ENCODE measurements at regions of chr1 and their contacts with region 1.

Region 1: DNA sequence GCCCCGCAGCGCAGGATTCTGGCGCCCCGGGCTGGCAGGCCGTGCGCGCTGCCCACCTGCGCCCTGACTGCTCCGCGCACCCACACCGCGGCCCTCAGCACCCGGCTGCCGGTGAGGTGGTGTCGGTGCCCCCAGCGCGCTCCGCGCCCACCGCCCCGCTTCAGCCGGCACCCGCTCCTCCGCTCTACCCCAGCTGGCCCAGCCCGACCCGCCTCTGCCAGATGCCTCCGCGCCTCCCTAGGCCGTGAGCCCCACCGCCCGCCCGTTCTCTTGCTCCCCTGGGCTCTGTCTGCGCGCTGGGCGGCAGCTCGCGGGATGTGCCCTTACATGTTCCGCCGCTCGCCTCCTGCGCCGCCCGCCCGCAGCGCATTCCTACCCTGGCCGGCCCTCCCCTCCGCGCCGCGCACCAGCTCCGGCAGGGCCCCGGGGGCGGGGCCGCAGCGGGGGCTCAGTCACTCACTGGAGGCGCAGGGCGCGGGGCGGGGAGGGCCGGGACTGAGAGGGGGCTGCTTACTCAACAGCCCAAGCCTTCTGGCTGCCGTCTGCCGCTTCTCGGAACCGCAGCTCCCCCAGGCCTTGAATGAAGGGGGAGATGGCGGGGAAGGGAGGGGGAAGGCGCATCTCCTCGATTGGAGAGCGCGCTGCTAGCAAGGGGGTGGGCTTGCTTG is at the start of gene PHLDA3:
- DNase-seq: peak; percentile 69
- H3K4me3 Mint-ChIP-seq: peak within 1 kb of the TSS; percentile 77
- H3K27ac Mint-ChIP-seq: peak within 1 kb of the TSS; percentile 45
- H3K4me1 Mint-ChIP-seq: peaks cover 21% of the 10 kb centered on the region
- H3K27me3 Mint-ChIP-seq: peaks cover 37% of the 10 kb centered on the region
- total RNA-seq, gene PHLDA3: 9.0 to 11.4 TPM

Region 2: GRCh38 chr1:201436393-201436792 is 32.6 kb before region 1 on chr1:
- CTCF ChIA-PET with region 1: interaction called, 11 read pairs
- POLR2A ChIA-PET with region 1: no interaction called
- DNase-seq: no peak
- H3K4me3 Mint-ChIP-seq: no peak overlapping the region
- H3K27ac Mint-ChIP-seq: no peak overlapping the region
- H3K4me1 Mint-ChIP-seq: peaks cover 4% of the 10 kb centered on the region
- H3K27me3 Mint-ChIP-seq: peaks cover 34% of the 10 kb centered on the region

Region 3: GRCh38 chr1:201447911-201448871 is 20.8 kb before region 1 on chr1:
- CTCF ChIA-PET with region 1: interaction called, 44 read pairs
- POLR2A ChIA-PET with region 1: interaction called, 3 read pairs
- DNase-seq: peak; percentile 78
- H3K4me3 Mint-ChIP-seq: no peak overlapping the region
- H3K27ac Mint-ChIP-seq: no peak overlapping the region
- H3K4me1 Mint-ChIP-seq: peaks cover 37% of the 10 kb centered on the region
- H3K27me3 Mint-ChIP-seq: peaks cover 25% of the 10 kb centered on the region

Region 4: GRCh38 chr1:201506556-201507359 is 37.8 kb after region 1 on chr1 and contains the start of gene CSRP1:
- CTCF ChIA-PET with region 1: no interaction called
- POLR2A ChIA-PET with region 1: interaction called, 11 read pairs
- DNase-seq: peak; percentile 89
- H3K4me3 Mint-ChIP-seq: peak within 1 kb of the TSS; percentile 93
- H3K27ac Mint-ChIP-seq: peak within 1 kb of the TSS; percentile 82
- H3K4me1 Mint-ChIP-seq: peaks cover 62% of the 10 kb centered on the region
- H3K27me3 Mint-ChIP-seq: no peaks in the 10 kb centered on the region
- total RNA-seq, gene CSRP1: 77.1 to 77.8 TPM

Region 5: DNA sequence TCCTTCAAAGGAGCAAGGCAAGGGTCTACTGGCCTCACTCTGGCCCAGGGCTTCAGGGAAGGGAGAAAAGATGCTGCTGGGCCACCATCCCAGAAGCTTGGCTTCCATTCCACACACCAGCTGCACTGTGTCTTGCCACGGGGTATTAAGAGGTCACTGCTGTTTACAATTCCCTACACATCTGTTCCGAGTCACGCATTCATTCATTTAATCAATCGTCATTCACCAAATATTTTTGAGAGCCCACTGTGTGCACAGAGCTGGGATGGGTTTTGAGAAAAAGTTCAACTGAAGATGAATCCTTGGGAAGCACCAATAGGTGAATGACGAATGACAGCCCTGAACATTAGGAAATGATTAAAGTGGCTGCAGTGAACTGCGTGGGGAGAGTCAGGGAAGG is 171.6 kb after region 1 on chr1:
- CTCF ChIA-PET with region 1: no interaction called
- POLR2A ChIA-PET with region 1: no interaction called
- DNase-seq: no peak
- H3K4me3 Mint-ChIP-seq: no peak overlapping the region
- H3K27ac Mint-ChIP-seq: no peak overlapping the region
- H3K4me1 Mint-ChIP-seq: no peaks in the 10 kb centered on the region
- H3K27me3 Mint-ChIP-seq: peaks cover 8% of the 10 kb centered on the region